ENCODE measurements at regions of chr6 and their contacts with region 1.

Region 1: DNA sequence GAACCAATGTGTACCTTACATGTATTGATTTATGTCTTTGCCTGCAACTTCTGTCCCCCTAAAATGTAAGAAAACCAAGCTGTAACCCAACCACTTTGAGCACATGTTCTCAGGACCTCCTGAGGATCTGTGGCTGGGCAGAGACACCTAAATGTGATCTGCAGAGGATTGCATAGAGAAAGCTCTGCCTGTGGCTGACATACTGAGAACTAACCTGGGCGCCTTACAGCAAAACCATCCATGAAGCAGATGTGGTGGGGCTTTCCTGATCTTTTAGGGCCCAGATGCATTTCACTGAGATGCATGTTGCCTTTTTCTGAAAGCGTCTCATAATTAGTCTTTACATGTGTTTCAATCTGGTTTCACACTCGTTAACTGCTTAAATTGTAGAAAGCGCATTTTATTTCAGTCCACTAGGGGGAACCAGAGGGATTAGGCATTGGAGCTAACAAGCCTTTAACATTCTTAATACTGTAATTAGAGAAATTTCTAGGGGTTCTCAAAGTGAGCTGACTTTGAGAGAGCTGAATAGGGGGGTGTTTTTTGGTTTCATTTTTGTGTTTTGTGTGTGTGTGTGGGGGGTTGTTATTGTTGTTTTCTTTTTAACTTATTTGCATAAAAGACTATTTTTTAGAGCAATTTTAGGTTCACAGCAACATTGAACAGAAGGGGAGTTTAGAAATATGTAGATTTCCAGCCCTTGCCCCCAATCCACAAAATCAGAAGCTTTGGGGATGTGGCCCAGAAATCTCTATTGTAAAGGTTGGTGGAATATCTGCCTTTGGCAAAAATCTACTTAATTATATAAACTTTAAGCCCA is 50.9 kb upstream of the FAM184A start:
- DNase-seq: no peak
- H3K4me3 Mint-ChIP-seq: no peak overlapping the region
- H3K27ac Mint-ChIP-seq: no peak overlapping the region
- H3K4me1 Mint-ChIP-seq: peaks cover 2% of the 10 kb centered on the region
- H3K27me3 Mint-ChIP-seq: no peaks in the 10 kb centered on the region

Region 2: GRCh38 chr6:119172824-119173223 is 43.5 kb after region 1 on chr6:
- CTCF ChIA-PET with region 1: interaction called, 13 read pairs
- POLR2A ChIA-PET with region 1: no interaction called
- intact Hi-C with region 1: loop called (anchors 1 kb)
- DNase-seq: no peak
- H3K4me3 Mint-ChIP-seq: no peak overlapping the region
- H3K27ac Mint-ChIP-seq: no peak overlapping the region
- H3K4me1 Mint-ChIP-seq: no peaks in the 10 kb centered on the region
- H3K27me3 Mint-ChIP-seq: no peaks in the 10 kb centered on the region

Measured in activated CD4-positive, alpha-beta memory T cell treated with anti-CD3 and anti-CD28 coated beads for 36 hours (primary cell).